HCT116 (cell line): ENCODE measurements at regions of chr12 and their contacts with region 1.

Region 1: DNA sequence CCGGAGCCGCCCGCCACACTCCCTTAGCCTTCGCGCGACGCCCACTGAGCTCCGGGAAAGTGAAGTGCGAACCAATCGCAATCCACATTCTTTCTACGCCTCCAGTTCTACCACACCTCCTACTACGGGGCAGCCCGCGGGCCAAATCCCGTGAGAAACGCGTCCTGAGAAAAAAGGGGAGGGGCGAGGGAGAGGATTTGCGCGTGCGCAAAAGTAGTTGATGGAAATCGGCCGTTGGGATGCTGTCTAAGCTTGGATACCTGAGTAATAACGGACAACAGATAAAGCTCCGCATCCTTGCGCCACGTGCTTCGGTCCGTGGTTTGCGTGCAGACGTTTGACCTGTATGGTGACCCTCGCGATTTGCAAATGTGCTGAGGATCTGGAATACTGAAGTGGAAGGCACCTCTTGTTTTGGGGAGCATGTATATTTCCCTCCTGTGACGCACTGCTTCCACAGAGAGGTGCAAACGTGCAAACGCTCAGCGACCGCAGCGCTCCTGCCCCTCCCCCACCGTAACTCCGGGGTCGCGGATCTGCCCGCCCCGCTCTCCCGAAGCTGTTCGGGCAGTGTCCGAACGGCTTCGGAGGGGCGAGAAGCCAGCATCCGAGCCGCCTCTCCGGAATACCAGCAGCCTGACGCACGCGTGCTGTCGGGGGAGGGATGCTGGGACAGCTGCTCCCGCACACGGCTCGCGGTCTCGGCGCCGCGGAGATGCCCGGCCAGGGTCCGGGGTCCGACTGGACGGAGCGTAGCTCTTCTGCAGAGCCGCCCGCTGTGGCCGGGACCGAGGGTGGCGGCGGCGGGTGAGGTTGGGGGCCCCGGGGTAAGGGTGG is at the starts of genes FAM216A and GPN3:
- DNase-seq: peak; percentile 98
- ATAC-seq: peak; percentile 84
- H3K4me3 ChIP-seq: peak within 1 kb of the TSS; percentile 85 to 86
- H3K27ac ChIP-seq: peak within 1 kb of the TSS; percentile 93
- H3K4me1 ChIP-seq: peaks cover 12 to 25% of the 10 kb centered on the region in 2 experiments
- H3K27me3 ChIP-seq: no peaks in the 10 kb centered on the region
- CTCF ChIP-seq: no peak
- POLR2A ChIP-seq: peak; percentile 96
- RAD21 ChIP-seq: no peak
- total RNA-seq, gene FAM216A: 10.1 TPM
- total RNA-seq, gene GPN3: 46.2 TPM

Region 2: GRCh38 chr12:110431957-110432587 is 36.4 kb before region 1 on chr12:
- CTCF ChIA-PET with region 1: interaction called, 11 read pairs
- POLR2A ChIA-PET with region 1: interaction called, 5 read pairs
- RAD21 ChIA-PET with region 1: interaction called in 1 of 2 experiments, 7 read pairs
- intact Hi-C with region 1: no loop called
- DNase-seq: no peak
- ATAC-seq: no peak; the same call in 1 of the 2 replicates
- H3K4me3 ChIP-seq: no peak overlapping the region; a peak in 1 of 4 replicates
- H3K27ac ChIP-seq: peak overlapping the region; percentile 35; the same call in 1 of the 2 replicates
- H3K4me1 ChIP-seq: peaks cover 4 to 11% of the 10 kb centered on the region in 2 experiments; a peak in 3 of 4 replicates
- H3K27me3 ChIP-seq: no peaks in the 10 kb centered on the region
- CTCF ChIP-seq: no peak
- POLR2A ChIP-seq: no peak
- RAD21 ChIP-seq: no peak

Region 3: DNA sequence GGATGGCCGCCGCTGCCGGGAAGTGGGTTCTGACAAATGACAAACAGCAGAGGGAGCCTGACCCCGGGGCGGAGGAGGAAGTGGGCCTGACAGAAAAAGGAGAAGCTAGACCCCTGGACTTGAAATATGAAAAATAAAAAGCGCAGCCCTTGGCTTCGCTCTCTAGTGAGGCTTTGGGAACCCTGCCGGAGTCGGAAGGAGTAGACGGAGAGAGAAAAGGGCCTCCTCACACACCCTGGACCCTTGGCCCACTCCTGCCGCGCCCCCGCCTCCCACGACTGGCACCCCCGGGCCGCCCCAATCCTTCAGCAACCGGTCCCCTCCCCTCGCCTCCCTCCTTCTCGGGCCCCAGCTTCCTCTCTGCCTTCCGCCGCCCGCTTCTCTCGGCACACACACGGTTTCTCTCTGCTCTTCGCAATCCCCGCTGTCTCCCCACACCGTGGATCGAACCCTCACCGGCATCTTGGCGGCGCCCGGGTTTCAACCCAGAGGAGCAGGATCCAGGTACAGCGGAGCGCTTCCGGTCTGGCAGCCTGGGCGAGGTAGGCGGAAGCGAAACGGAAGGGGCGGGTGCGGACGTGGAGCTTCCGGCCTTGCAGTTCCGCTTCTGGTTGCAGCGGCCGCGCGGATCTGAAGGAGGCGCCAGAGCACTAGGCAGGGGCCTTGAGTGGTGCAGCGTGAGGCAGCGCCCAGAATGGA is 18.5 kb before region 1 on chr12 and contains the start of gene ARPC3:
- CTCF ChIA-PET with region 1: interaction called, 27 read pairs
- POLR2A ChIA-PET with region 1: interaction called, 15 read pairs
- RAD21 ChIA-PET with region 1: interaction called in 1 of 2 experiments, 4 read pairs
- intact Hi-C with region 1: loop called (anchors 1 kb)
- DNase-seq: peak; percentile 84
- ATAC-seq: peak; percentile 95
- H3K4me3 ChIP-seq: peak within 1 kb of the TSS; percentile 77 to 95
- H3K27ac ChIP-seq: peak within 1 kb of the TSS; percentile 78
- H3K4me1 ChIP-seq: peaks cover 0 to 13% of the 10 kb centered on the region in 2 experiments; a peak in 2 of 4 replicates
- H3K27me3 ChIP-seq: no peaks in the 10 kb centered on the region
- CTCF ChIP-seq: peak; percentile 81 to 87 (median 85)
- POLR2A ChIP-seq: peak; percentile 50
- RAD21 ChIP-seq: peak; percentile 97
- total RNA-seq, gene ARPC3: 115 TPM

Region 4: GRCh38 chr12:110501752-110502738 is 33.6 kb after region 1 on chr12 and contains the starts of genes RAD9B and VPS29:
- CTCF ChIA-PET with region 1: interaction called, 5 read pairs
- POLR2A ChIA-PET with region 1: interaction called, 13 read pairs
- RAD21 ChIA-PET with region 1: interaction called in 1 of 2 experiments, 3 read pairs
- intact Hi-C with region 1: no loop called
- DNase-seq: peak; percentile 98
- ATAC-seq: peak; percentile 94
- H3K4me3 ChIP-seq: peak within 1 kb of the TSS; percentile 91 to 94
- H3K27ac ChIP-seq: peak within 1 kb of the TSS; percentile 85
- H3K4me1 ChIP-seq: peaks cover 11 to 23% of the 10 kb centered on the region in 2 experiments
- H3K27me3 ChIP-seq: no peaks in the 10 kb centered on the region
- CTCF ChIP-seq: no peak
- POLR2A ChIP-seq: peak; percentile 73
- RAD21 ChIP-seq: no peak
- total RNA-seq, gene RAD9B: 0.17 TPM
- total RNA-seq, gene VPS29: 95.7 TPM

Region 5: DNA sequence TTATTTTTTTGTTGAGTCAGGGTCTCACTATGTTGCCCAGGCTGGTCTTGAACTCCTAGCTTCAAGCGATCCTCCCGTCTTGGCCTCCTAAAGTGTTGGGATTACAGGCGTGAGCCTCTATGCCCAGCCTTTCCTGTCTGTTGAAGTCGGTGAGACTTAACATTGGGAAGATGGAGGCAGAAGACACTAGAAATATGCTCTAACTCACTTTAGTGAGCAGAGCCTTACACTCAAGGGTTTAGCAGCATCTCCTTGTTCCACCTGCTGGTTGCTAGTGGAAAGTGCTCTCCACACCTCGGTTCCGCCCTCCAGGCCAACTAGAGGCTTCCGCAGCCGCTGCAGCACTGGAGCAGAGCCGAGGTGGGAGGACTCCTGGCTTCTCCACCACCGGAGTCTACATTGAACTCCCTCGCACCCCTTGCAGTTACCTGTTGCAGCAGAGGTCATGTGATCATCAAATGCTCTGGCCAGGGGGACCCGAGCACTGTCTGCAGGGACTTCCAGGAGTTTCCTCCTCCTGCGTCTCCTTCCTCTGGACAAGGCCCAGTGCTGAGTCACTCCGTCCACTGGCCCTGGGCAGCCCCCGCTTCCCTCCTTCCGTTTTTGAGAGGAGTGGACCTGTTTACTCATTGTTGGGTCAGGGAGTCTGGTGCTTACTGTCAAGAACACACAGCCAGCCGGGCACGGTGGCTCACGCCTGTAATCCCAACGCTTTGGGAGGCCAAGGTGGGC is 229.9 kb after region 1 on chr12:
- CTCF ChIA-PET with region 1: no interaction called
- POLR2A ChIA-PET with region 1: no interaction called
- RAD21 ChIA-PET with region 1: no interaction called
- intact Hi-C with region 1: loop called (anchors 1 kb)
- DNase-seq: peak; percentile 82
- ATAC-seq: peak; percentile 98
- H3K4me3 ChIP-seq: peak overlapping the region in 1 of 2 experiments; percentile 30; a peak in 1 of 4 replicates
- H3K27ac ChIP-seq: peak overlapping the region; percentile 49
- H3K4me1 ChIP-seq: peaks cover 6 to 14% of the 10 kb centered on the region in 2 experiments
- H3K27me3 ChIP-seq: no peaks in the 10 kb centered on the region
- CTCF ChIP-seq: peak; percentile 79 to 81 (median 80); a peak in 5 of 6 replicates
- POLR2A ChIP-seq: no peak
- RAD21 ChIP-seq: peak; percentile 86

Region 6: DNA sequence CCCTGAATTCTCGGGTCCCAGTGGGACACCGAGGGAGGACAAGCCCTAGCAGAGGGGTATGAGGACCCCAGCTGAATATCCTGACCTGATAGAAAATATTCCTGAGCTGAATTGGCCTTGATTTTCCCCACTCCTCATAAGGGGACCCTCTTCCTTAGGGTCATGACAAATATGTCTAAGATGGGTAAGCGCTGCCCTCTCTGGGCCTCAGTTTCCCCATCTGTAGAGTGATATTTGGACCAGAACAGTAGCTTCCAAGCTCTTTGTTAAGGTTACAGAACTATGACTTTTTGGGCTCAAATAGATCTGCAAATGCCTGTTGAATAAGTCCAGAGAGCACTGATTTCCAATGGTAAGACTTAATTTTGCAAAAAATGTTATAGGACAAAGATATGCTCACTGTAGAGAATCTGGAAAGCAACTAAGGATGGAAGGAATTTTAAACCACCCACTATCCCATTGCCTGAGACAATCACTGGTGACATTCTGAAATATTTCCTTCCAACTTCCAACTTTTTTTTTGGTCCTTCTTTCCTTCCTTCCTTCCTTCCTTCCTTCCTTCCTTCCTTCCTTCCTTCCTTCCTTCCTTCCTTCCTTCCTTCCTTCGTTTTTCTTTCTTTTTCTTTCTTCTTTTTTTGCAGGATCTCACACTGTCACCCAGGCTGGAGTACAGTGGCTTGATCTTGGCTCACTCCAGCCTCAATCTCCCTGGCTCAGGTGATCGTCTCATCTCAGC is 420.0 kb after region 1 on chr12:
- CTCF ChIA-PET with region 1: no interaction called
- POLR2A ChIA-PET with region 1: no interaction called
- RAD21 ChIA-PET with region 1: interaction called in 1 of 2 experiments, 3 read pairs
- intact Hi-C with region 1: loop called (anchors 1 kb)
- DNase-seq: no peak
- ATAC-seq: no peak
- H3K4me3 ChIP-seq: peak overlapping the region in 1 of 2 experiments; percentile 57; a peak in 3 of 4 replicates
- H3K27ac ChIP-seq: no peak overlapping the region
- H3K4me1 ChIP-seq: peaks cover 0 to 14% of the 10 kb centered on the region in 2 experiments; a peak in 2 of 4 replicates
- H3K27me3 ChIP-seq: no peaks in the 10 kb centered on the region
- CTCF ChIP-seq: no peak
- POLR2A ChIP-seq: no peak
- RAD21 ChIP-seq: no peak